HCT116 (cell line): ENCODE measurements at regions of chr14 and their contacts with region 1.

Region 1: GRCh38 chr14:32252030-32252670 is 49.1 kb upstream of the RNU6-8 start:
- DNase-seq: peak; percentile 62
- ATAC-seq: peak; percentile 89
- H3K4me3 ChIP-seq: no peak overlapping the region
- H3K27ac ChIP-seq: no peak overlapping the region
- H3K4me1 ChIP-seq: peaks cover 0 to 10% of the 10 kb centered on the region in 2 experiments; a peak in 2 of 4 replicates
- H3K27me3 ChIP-seq: no peaks in the 10 kb centered on the region
- CTCF ChIP-seq: peak; percentile 81 to 93 (median 89)
- POLR2A ChIP-seq: no peak
- RAD21 ChIP-seq: peak; percentile 96

Region 2: GRCh38 chr14:31360919-31361662 is 891.1 kb before region 1 on chr14:
- CTCF ChIA-PET with region 1: no interaction called
- POLR2A ChIA-PET with region 1: no interaction called
- RAD21 ChIA-PET with region 1: no interaction called
- intact Hi-C with region 1: loop called (anchors 10 kb)
- DNase-seq: no peak
- ATAC-seq: no peak; the same call in 1 of the 2 replicates
- H3K4me3 ChIP-seq: no peak overlapping the region
- H3K27ac ChIP-seq: no peak overlapping the region
- H3K4me1 ChIP-seq: peaks cover 0 to 19% of the 10 kb centered on the region in 2 experiments; a peak in 2 of 4 replicates
- H3K27me3 ChIP-seq: no peaks in the 10 kb centered on the region
- CTCF ChIP-seq: no peak
- POLR2A ChIP-seq: no peak
- RAD21 ChIP-seq: no peak

Region 3: DNA sequence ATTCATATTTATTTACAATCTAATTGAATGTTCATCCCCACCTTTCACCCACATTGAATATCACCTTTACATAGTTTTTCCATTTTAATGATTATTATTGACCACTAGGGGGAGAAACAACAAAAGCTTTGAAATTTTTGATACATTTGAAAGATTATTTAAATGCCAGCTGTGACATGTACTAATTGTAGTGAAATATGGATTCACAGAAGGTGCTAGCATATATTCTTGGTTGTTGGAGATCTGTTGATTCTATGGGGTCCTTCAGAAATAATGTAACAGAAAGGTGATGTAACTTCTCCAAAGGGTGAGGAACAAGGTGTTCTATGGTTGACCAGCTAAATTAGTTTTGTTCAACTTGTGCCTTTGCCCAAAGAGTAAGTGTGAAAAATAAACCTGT is 741.9 kb before region 1 on chr14:
- CTCF ChIA-PET with region 1: interaction called, 10 read pairs
- POLR2A ChIA-PET with region 1: no interaction called
- RAD21 ChIA-PET with region 1: interaction called in 1 of 2 experiments, 3 read pairs
- intact Hi-C with region 1: loop called (anchors 1 kb)
- DNase-seq: peak; percentile 27
- ATAC-seq: peak; percentile 55
- H3K4me3 ChIP-seq: no peak overlapping the region
- H3K27ac ChIP-seq: no peak overlapping the region
- H3K4me1 ChIP-seq: no peaks in the 10 kb centered on the region
- H3K27me3 ChIP-seq: no peaks in the 10 kb centered on the region
- CTCF ChIP-seq: peak; percentile 27 to 80 (median 67); a peak in 5 of 6 replicates
- POLR2A ChIP-seq: no peak
- RAD21 ChIP-seq: peak; percentile 76

Region 4: DNA sequence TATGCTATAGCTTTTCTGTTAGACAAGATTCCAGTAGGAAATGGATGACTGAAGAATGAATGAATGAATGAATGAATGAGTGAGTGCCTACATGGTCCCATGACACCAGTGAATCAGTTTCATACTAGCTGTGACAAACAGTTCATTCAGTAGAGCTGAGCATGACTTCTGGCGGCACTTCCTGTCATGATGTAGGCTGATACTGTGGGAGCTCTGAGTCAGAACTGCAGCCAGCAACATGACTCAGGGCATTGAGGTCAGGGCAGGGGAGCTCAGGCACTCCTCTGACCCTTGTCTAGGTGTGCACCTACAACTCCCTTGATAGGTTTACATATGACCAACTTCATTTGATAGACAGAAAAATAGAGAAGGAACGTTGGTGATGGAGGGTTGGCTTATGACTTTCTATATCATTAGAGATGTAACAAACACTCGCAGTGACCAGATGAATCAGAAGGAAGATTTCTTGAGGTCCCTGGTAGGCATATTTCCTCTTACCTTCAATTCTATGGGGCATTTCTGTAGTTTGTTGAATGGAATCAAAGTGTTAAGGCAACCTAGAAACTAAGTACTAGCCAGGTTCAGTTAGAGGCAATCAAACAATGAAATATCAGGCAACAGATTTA is 314.3 kb before region 1 on chr14:
- CTCF ChIA-PET with region 1: interaction called, 73 read pairs
- POLR2A ChIA-PET with region 1: interaction called, 4 read pairs
- RAD21 ChIA-PET with region 1: interaction called, 7 to 9 read pairs
- intact Hi-C with region 1: loop called (anchors 1 kb)
- DNase-seq: peak; percentile 91
- ATAC-seq: peak; percentile 91
- H3K4me3 ChIP-seq: no peak overlapping the region
- H3K27ac ChIP-seq: no peak overlapping the region
- H3K4me1 ChIP-seq: peaks cover 30 to 50% of the 10 kb centered on the region in 2 experiments
- H3K27me3 ChIP-seq: no peaks in the 10 kb centered on the region
- CTCF ChIP-seq: no peak
- POLR2A ChIP-seq: no peak
- RAD21 ChIP-seq: peak; percentile 13; the same call in 1 of the 2 replicates

Region 5: GRCh38 chr14:32368107-32368506 is 116.0 kb after region 1 on chr14:
- CTCF ChIA-PET with region 1: no interaction called
- POLR2A ChIA-PET with region 1: no interaction called
- RAD21 ChIA-PET with region 1: no interaction called
- intact Hi-C with region 1: no loop called
- DNase-seq: no peak
- ATAC-seq: no peak
- H3K4me3 ChIP-seq: no peak overlapping the region
- H3K27ac ChIP-seq: no peak overlapping the region
- H3K4me1 ChIP-seq: peaks cover 0 to 12% of the 10 kb centered on the region in 2 experiments; a peak in 2 of 4 replicates
- H3K27me3 ChIP-seq: no peaks in the 10 kb centered on the region
- CTCF ChIP-seq: no peak
- POLR2A ChIP-seq: no peak
- RAD21 ChIP-seq: no peak

Region 6: DNA sequence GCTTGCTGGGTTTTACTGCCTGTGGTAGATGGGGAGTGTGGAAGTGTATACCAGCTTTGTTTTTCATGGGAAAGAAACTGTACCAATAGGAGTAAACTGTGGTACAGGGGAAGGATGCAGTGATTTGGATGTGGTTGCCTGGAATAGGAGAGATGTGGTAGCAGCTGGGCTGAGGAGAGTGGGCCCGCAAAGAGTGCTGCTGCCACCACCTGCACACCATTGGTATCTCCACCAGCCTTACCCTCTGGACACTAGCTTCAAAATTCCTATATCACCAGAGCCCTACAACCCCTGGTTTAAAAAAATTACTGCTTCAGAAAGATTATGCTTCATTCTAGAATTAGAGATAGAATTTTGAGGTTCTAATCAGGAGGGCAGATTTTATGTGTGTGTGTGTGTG is 130.6 kb after region 1 on chr14:
- CTCF ChIA-PET with region 1: interaction called, 19 read pairs
- POLR2A ChIA-PET with region 1: no interaction called
- RAD21 ChIA-PET with region 1: interaction called, 3 to 9 read pairs
- intact Hi-C with region 1: loop called (anchors 5 kb)
- DNase-seq: no peak
- ATAC-seq: peak; percentile 93
- H3K4me3 ChIP-seq: no peak overlapping the region
- H3K27ac ChIP-seq: no peak overlapping the region
- H3K4me1 ChIP-seq: no peaks in the 10 kb centered on the region
- H3K27me3 ChIP-seq: no peaks in the 10 kb centered on the region
- CTCF ChIP-seq: peak; percentile 24 to 59 (median 47); a peak in 4 of 6 replicates
- POLR2A ChIP-seq: no peak
- RAD21 ChIP-seq: peak; percentile 73

Region 7: DNA sequence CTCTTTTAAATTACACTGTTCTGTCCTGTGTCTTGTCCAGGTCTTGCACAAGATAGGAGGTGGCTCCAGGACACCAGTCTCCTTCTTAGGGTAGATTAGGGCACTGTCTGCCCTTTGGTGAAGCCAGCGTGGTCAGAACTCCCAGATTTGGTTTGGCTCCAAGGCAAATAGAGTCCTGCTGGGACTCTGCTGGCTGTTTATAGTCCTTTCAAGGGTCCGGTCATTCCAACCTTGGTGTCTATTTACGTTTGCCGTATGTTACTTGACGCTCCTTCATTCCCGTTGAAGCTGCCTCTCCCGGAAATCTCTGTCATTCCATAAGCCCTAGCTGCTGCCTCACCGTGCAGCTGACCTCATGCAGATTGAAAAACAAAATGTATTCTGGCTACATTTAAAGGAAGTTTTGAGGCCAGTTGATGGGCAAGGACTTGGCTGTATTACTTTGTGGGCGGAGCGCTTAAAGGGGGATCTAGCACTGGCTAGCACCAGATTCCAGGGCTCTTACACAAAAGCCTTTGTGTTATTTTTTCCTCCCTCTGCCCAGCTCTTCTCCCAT is 257.6 kb after region 1 on chr14:
- CTCF ChIA-PET with region 1: interaction called, 11 read pairs
- POLR2A ChIA-PET with region 1: no interaction called
- RAD21 ChIA-PET with region 1: interaction called in 1 of 2 experiments, 3 read pairs
- intact Hi-C with region 1: no loop called
- DNase-seq: no peak
- ATAC-seq: no peak
- H3K4me3 ChIP-seq: no peak overlapping the region
- H3K27ac ChIP-seq: no peak overlapping the region
- H3K4me1 ChIP-seq: peaks cover 4 to 6% of the 10 kb centered on the region in 2 experiments; a peak in 3 of 4 replicates
- H3K27me3 ChIP-seq: no peaks in the 10 kb centered on the region
- CTCF ChIP-seq: no peak
- POLR2A ChIP-seq: no peak
- RAD21 ChIP-seq: no peak